CD4-positive, alpha-beta memory T cell (primary cell): ENCODE measurements at regions of chr17 and their contacts with region 1.

Region 1: GRCh38 chr17:50783193-50783660 is 15.9 kb upstream of the ANKRD40CL start:
- DNase-seq: peak; percentile 70 to 76 (median 72)
- H3K4me3 ChIP-seq: no peak overlapping the region
- H3K4me3 Mint-ChIP-seq: peak overlapping the region in 4 of 8 donors; percentile 45 to 75 (median 62)
- H3K27ac ChIP-seq: no peak overlapping the region
- H3K27ac Mint-ChIP-seq: peak overlapping the region in 3 of 7 donors; percentile 31 to 78 (median 43)
- H3K4me1 ChIP-seq: peaks cover 29% of the 10 kb centered on the region
- H3K4me1 Mint-ChIP-seq: peaks cover 20 to 42% (median 31%) of the 10 kb centered on the region in 4 donors
- H3K27me3 ChIP-seq: no peaks in the 10 kb centered on the region
- H3K27me3 Mint-ChIP-seq: peaks cover 5% of the 10 kb centered on the region in 2 donors

Region 2: DNA sequence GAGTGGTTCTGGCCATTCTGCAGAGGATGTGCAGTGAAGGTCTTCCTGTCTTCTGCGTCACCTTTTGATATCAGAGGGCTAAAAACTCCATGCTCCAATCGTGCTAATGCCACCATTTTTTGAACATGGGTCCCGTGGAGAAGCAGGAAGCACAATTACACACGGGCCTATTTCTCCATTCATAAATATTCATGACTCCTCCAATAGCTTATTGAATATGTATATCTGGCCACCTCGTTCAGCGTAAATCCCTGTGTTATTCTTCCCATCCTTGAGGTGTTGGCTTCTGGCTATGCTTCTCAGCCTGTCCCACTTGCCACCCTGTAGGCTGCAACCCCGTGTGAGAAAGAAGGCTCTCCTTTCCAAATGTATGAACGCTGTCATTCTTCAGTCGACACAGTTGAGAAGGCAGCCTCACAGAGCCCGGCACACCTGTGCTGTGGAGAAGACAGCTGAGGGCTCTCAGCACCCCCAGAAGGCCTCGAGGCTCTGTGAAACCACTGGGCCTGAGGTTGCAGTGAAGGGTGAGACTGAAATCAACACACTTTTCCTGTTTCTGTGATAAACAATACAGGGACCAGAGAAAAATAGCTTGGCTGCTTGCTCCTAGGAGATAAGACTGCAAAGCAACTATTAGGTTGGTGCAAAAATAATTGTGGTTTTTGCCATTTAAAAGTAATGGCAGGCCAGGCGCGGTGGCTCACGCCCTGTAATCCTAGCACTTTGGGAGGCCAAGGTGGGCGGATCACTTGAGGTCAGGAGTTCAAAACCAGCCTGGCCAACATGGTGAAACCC is 11.0 kb before region 1 on chr17:
- CTCF ChIA-PET with region 1: interaction called, 14 read pairs
- POLR2A ChIA-PET with region 1: no interaction called
- intact Hi-C with region 1: no loop called
- DNase-seq: no peak
- H3K4me3 ChIP-seq: no peak overlapping the region
- H3K4me3 Mint-ChIP-seq: peak overlapping the region in 1 of 8 donors; percentile 30
- H3K27ac ChIP-seq: no peak overlapping the region
- H3K27ac Mint-ChIP-seq: peak overlapping the region in 2 of 7 donors; percentile 7 to 51
- H3K4me1 ChIP-seq: no peaks in the 10 kb centered on the region
- H3K4me1 Mint-ChIP-seq: peaks cover 0 to 8% (median 0%) of the 10 kb centered on the region in 4 donors
- H3K27me3 ChIP-seq: no peaks in the 10 kb centered on the region
- H3K27me3 Mint-ChIP-seq: peaks cover 0 to 2% of the 10 kb centered on the region in 2 donors

Region 3: GRCh38 chr17:50841949-50842354 is 58.7 kb after region 1 on chr17:
- CTCF ChIA-PET with region 1: interaction called, 67 read pairs
- POLR2A ChIA-PET with region 1: interaction called, 5 read pairs
- intact Hi-C with region 1: loop called (anchors 1 kb)
- DNase-seq: peak in 4 of 5 donors; percentile 42 to 46 (median 44)
- H3K4me3 ChIP-seq: no peak overlapping the region
- H3K4me3 Mint-ChIP-seq: no peak overlapping the region
- H3K27ac ChIP-seq: no peak overlapping the region
- H3K27ac Mint-ChIP-seq: peak overlapping the region in 2 of 7 donors; percentile 32 to 48
- H3K4me1 ChIP-seq: no peaks in the 10 kb centered on the region
- H3K4me1 Mint-ChIP-seq: peaks cover 0 to 5% (median 3%) of the 10 kb centered on the region in 4 donors
- H3K27me3 ChIP-seq: no peaks in the 10 kb centered on the region
- H3K27me3 Mint-ChIP-seq: peaks cover 2% of the 10 kb centered on the region in 2 donors

Region 4: DNA sequence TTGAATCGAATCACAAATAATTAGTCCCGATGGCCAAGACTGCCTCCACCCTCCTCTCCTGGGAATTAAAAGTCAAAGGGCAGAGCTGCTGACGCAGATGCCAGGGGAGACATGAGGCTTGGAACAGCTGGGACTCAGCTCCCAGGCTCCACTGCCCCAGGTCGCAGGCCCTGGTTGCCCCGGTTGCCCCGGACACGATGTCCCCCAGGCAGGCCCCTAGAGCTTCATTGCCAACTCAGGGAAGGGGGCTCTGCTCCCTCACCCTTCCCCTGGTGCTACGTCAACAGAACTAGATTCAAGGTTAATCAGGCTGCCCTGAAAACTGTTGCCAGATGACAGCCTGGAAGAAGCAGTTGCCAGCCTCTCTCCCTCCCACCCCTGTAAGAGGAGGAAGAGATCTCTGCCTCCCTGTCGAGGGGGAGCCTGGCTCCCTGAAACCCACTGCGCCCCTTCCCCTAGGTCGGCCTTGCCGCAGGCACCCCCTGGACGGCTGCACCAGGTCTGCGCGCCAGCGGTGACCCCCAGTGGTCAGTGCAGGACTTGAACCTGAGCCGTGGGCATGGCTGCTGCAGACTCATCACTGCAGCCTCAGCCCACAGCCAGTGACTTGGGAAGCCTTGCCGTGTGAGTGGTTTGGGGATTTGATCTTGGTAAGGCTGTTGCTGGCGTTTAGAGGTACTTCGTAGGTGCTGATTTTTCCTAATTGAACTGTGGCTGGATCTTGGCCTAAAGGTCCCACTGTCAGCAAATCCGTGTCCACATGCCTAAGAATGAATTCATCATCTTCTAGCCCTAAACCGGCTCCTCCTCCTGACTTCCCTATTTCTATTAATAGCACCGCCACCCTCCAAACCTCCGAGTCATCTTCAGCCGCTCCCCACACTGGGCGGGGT is 167.0 kb after region 1 on chr17:
- CTCF ChIA-PET with region 1: interaction called, 16 read pairs
- POLR2A ChIA-PET with region 1: interaction called, 6 read pairs
- intact Hi-C with region 1: no loop called
- DNase-seq: peak in 4 of 5 donors; percentile 39 to 66 (median 44)
- H3K4me3 ChIP-seq: no peak overlapping the region
- H3K4me3 Mint-ChIP-seq: peak overlapping the region in 2 of 8 donors; percentile 25 to 35
- H3K27ac ChIP-seq: no peak overlapping the region
- H3K27ac Mint-ChIP-seq: peak overlapping the region in 4 of 7 donors; percentile 39 to 72 (median 58)
- H3K4me1 ChIP-seq: peaks cover 20% of the 10 kb centered on the region
- H3K4me1 Mint-ChIP-seq: peaks cover 16 to 39% (median 25%) of the 10 kb centered on the region in 4 donors
- H3K27me3 ChIP-seq: no peaks in the 10 kb centered on the region
- H3K27me3 Mint-ChIP-seq: peaks cover 0 to 2% of the 10 kb centered on the region in 2 donors

Region 5: GRCh38 chr17:50956750-50957523 is 173.7 kb after region 1 on chr17:
- CTCF ChIA-PET with region 1: interaction called, 13 read pairs
- POLR2A ChIA-PET with region 1: no interaction called
- intact Hi-C with region 1: loop called (anchors 1 kb)
- DNase-seq: peak; percentile 64 to 69 (median 65)
- H3K4me3 ChIP-seq: no peak overlapping the region
- H3K4me3 Mint-ChIP-seq: peak overlapping the region in 2 of 8 donors; percentile 40 to 67
- H3K27ac ChIP-seq: no peak overlapping the region
- H3K27ac Mint-ChIP-seq: peak overlapping the region in 6 of 7 donors; percentile 32 to 89 (median 76)
- H3K4me1 ChIP-seq: peaks cover 4% of the 10 kb centered on the region
- H3K4me1 Mint-ChIP-seq: peaks cover 1 to 5% (median 4%) of the 10 kb centered on the region in 4 donors
- H3K27me3 ChIP-seq: no peaks in the 10 kb centered on the region
- H3K27me3 Mint-ChIP-seq: peaks cover 0 to 2% of the 10 kb centered on the region in 2 donors

Region 6: GRCh38 chr17:51153210-51154072 is 370.2 kb after region 1 on chr17 and contains the start of gene NME1:
- CTCF ChIA-PET with region 1: no interaction called
- POLR2A ChIA-PET with region 1: interaction called, 6 read pairs
- intact Hi-C with region 1: loop called (anchors 1 kb)
- DNase-seq: peak; percentile 98 to 99 (median 98)
- H3K4me3 ChIP-seq: peak within 1 kb of the TSS; percentile 77 to 85
- H3K4me3 Mint-ChIP-seq: no peak within 1 kb of the TSS
- H3K27ac ChIP-seq: peak within 1 kb of the TSS; percentile 61
- H3K27ac Mint-ChIP-seq: no peak within 1 kb of the TSS
- H3K4me1 ChIP-seq: peaks cover 21% of the 10 kb centered on the region
- H3K4me1 Mint-ChIP-seq: peaks cover 0 to 7% (median 2%) of the 10 kb centered on the region in 4 donors
- H3K27me3 ChIP-seq: no peaks in the 10 kb centered on the region
- H3K27me3 Mint-ChIP-seq: peaks cover 0 to 1% of the 10 kb centered on the region in 2 donors
- total RNA-seq, gene NME1: 10.0 to 12.2 TPM

Region 7: GRCh38 chr17:51260125-51260880 is 477.1 kb after region 1 on chr17 and contains the start of gene UTP18:
- CTCF ChIA-PET with region 1: no interaction called
- POLR2A ChIA-PET with region 1: no interaction called
- intact Hi-C with region 1: loop called (anchors 5 kb)
- DNase-seq: peak; percentile 96 to 98 (median 97)
- H3K4me3 ChIP-seq: peak within 1 kb of the TSS; percentile 74 to 85
- H3K4me3 Mint-ChIP-seq: peak within 1 kb of the TSS; percentile 91 to 98 (median 96)
- H3K27ac ChIP-seq: peak within 1 kb of the TSS; percentile 97
- H3K27ac Mint-ChIP-seq: peak within 1 kb of the TSS; percentile 96 to 99 (median 99)
- H3K4me1 ChIP-seq: peaks cover 72% of the 10 kb centered on the region
- H3K4me1 Mint-ChIP-seq: peaks cover 42 to 84% (median 58%) of the 10 kb centered on the region in 4 donors
- H3K27me3 ChIP-seq: no peaks in the 10 kb centered on the region
- H3K27me3 Mint-ChIP-seq: no peaks in the 10 kb centered on the region
- total RNA-seq, gene UTP18: 44.0 to 44.1 TPM